AG04450 (cell line): ENCODE measurements at regions of chr9 and their contacts with region 1.

Region 1: GRCh38 chr9:131178382-131178781 is 53.0 kb downstream of the NUP214 start:
- DNase-seq: peak; percentile 74
- H3K4me3 ChIP-seq: no peak overlapping the region
- H3K27ac ChIP-seq: peak overlapping the region; percentile 89
- H3K27me3 ChIP-seq: no peaks in the 10 kb centered on the region
- CTCF ChIP-seq: peak; percentile 98

Region 2: DNA sequence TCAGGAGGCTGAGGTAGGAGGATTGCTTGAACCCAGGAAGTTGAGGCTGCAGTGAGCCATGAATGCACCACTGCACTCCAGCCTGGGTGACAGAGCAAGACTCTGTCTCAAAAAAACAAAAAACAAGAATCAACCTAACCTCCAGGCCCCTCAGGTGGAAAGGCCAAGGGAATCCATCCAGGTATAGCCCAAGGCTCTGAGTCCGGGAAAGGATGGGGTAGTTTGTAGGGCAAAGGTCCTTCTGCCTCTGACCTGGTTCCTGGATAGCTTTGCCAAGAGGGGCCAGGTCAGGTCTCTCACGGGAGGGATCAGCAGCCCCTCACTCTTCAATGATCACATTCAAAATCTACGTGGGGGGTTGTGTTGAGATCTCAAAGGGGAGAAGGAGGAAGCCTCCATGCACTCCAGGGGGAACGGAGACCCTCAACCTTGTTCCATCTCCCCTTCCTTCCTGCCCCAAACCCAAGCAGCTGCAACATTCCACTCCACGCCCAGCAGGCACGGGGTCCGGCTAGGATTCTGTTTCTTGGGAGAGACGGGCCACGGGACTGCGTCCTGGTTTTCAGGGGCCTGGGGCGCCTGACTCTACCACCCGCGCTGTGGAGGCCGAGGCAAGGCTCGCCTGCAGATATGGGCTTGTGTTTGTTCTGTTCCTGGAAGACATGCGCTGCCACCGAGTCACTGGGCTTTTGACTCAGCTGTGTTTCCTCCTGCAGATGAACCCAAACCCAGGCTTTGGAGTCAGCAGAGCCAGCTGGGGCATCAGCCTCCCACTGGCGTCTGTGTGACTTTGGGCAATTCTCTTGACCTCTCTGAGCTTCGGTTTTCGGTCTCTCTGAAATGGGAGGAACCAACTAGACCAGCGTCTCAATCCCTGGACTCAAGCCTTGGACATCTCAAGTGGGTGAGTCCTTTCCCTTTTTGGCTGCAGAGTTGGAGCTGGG is 146.6 kb after region 1 on chr9:
- CTCF ChIA-PET with region 1: interaction called, 12 read pairs
- POLR2A ChIA-PET with region 1: interaction called, 6 read pairs
- DNase-seq: no peak
- H3K4me3 ChIP-seq: no peak overlapping the region
- H3K27ac ChIP-seq: no peak overlapping the region
- H3K27me3 ChIP-seq: peaks cover 1% of the 10 kb centered on the region
- CTCF ChIP-seq: no peak

Region 3: GRCh38 chr9:131475111-131475955 is 297.0 kb after region 1 on chr9:
- CTCF ChIA-PET with region 1: no interaction called
- POLR2A ChIA-PET with region 1: no interaction called
- DNase-seq: no peak
- H3K4me3 ChIP-seq: no peak overlapping the region
- H3K27ac ChIP-seq: no peak overlapping the region
- H3K27me3 ChIP-seq: no peaks in the 10 kb centered on the region
- CTCF ChIP-seq: no peak